ENCODE measurements at regions of chr3 and their contacts with region 1.

Region 1: DNA sequence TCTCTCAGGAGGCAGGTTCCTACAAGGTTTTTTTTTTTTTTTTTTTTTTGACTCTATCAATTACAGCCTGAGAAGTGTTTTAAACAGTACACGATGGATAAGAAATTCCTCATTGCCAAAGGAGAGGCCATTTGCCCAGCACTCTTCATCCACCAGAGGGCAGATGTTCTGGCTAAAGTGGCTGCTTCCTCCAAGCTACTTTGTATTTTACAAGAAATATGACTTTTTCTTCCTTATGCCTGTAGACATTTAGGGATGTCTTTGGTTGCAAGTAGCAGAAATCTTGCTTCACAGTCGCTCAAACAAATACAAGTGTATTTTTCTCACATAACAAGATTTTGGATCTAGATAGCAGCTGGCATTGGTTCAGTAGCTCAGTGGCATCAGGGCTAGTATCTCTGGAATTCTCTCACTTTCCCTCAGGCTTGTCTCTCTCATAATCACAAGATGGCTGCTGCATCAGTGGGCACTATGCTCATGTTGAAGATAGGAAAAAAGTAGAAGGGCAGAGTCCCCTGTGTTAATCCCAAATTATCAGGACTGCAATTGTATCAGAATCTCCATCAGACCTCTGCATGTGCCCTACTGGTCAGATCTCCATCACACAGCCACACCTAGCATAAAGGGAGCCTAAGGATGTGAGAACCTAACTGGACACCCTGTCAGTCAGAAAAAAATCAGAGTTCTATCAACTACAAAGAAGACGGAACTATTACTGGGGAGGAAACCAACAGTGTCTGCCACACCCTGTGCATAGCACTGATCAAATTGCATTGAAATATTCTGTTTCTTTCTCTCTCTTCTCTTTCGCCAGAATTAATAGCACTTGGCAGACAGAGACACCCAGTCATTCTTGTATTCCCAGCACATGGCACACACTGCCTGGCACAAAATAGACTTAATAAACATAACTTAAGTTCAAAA is 138.9 kb upstream of the COL8A1 start:
- DNase-seq: peak; percentile 70
- H3K4me3 Mint-ChIP-seq: no peak overlapping the region
- H3K27ac Mint-ChIP-seq: no peak overlapping the region
- H3K4me1 Mint-ChIP-seq: peaks cover 28% of the 10 kb centered on the region
- H3K27me3 Mint-ChIP-seq: no peaks in the 10 kb centered on the region
- CTCF ChIP-seq: peak; percentile 61

Region 2: GRCh38 chr3:99458013-99458412 is 41.5 kb before region 1 on chr3:
- CTCF ChIA-PET with region 1: no interaction called
- POLR2A ChIA-PET with region 1: no interaction called
- intact Hi-C with region 1: no loop called
- DNase-seq: no peak
- H3K4me3 Mint-ChIP-seq: no peak overlapping the region
- H3K27ac Mint-ChIP-seq: no peak overlapping the region
- H3K4me1 Mint-ChIP-seq: no peaks in the 10 kb centered on the region
- H3K27me3 Mint-ChIP-seq: no peaks in the 10 kb centered on the region
- CTCF ChIP-seq: no peak

Region 3: GRCh38 chr3:99482191-99482590 is 17.3 kb before region 1 on chr3:
- CTCF ChIA-PET with region 1: interaction called, 39 read pairs
- POLR2A ChIA-PET with region 1: no interaction called
- intact Hi-C with region 1: no loop called
- DNase-seq: no peak
- H3K4me3 Mint-ChIP-seq: no peak overlapping the region
- H3K27ac Mint-ChIP-seq: no peak overlapping the region
- H3K4me1 Mint-ChIP-seq: no peaks in the 10 kb centered on the region
- H3K27me3 Mint-ChIP-seq: no peaks in the 10 kb centered on the region
- CTCF ChIP-seq: no peak

Region 4: DNA sequence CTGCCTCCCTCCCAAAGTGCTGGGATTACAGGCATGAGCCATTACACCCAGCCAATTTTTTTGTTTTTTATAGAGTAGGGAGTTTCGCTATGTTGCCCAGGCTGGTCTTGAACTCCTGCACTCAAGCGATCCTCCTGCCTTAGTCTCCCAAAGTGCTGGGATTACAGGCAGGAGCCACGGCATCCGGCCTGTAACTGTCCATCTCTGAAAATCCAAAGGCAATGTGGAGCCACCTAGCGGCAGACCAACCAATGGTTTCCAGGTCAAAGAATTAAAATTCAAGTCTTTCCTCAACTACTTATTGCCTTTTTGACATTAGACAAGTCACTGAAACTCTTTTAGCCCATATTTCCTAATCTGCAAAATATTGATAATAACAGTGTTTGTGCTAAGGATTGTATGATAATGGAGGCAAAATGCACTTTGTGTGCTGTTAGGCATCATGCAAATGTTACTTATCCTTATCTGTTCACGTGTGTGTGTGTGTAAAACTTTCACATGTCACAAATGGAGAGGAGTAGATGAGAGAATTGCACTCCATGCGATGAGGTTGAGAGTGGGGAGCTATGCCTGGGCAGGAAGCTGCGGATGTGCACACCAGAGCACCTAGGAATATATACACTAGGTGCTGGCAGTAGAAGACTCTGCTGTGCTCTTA is 187.6 kb after region 1 on chr3:
- CTCF ChIA-PET with region 1: interaction called, 58 read pairs
- POLR2A ChIA-PET with region 1: interaction called, 5 read pairs
- intact Hi-C with region 1: loop called (anchors 1 kb)
- DNase-seq: peak; percentile 76
- H3K4me3 Mint-ChIP-seq: no peak overlapping the region
- H3K27ac Mint-ChIP-seq: peak overlapping the region; percentile 71
- H3K4me1 Mint-ChIP-seq: peaks cover 15% of the 10 kb centered on the region
- H3K27me3 Mint-ChIP-seq: no peaks in the 10 kb centered on the region
- CTCF ChIP-seq: peak; percentile 69

Region 5: GRCh38 chr3:99747915-99748314 is 248.4 kb after region 1 on chr3:
- CTCF ChIA-PET with region 1: interaction called, 42 read pairs
- POLR2A ChIA-PET with region 1: no interaction called
- intact Hi-C with region 1: loop called (anchors 1 kb)
- DNase-seq: peak; percentile 49
- H3K4me3 Mint-ChIP-seq: no peak overlapping the region
- H3K27ac Mint-ChIP-seq: no peak overlapping the region
- H3K4me1 Mint-ChIP-seq: peaks cover 14% of the 10 kb centered on the region
- H3K27me3 Mint-ChIP-seq: no peaks in the 10 kb centered on the region
- CTCF ChIP-seq: peak; percentile 39

Region 6: DNA sequence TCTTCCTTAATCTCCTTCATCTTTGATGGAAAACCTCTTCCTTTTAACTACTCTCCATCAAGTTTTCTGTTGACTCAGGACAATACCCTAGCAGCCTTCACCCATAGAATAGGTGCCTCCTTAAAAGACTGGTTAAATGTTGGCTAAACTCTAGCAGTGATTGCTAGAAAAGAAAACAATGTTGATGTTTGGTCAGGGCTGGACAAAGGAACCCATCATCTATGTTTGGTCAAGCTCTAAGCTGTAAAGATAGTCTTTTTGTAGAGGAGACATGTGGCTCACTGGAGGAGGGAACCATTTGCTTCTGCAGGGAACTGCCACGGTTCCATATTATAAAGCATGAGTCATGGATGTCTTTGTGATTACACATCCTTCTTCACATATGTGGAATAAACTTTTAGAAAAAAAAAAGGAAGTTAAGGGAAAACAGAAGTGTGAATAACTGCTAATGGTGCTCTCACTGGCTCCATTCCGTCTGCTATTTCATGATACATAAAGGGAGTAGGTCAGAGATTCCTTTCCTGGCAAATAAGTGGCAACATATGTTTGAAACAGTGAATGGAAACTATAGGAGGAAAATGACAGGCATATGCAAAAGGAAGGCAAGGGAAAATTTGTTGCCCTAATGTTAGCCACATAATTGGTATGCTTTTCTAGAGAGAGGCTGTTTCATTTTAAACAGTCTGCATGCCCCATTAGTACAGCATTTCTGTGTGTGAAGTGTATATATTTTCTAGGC is 396.4 kb after region 1 on chr3:
- CTCF ChIA-PET with region 1: no interaction called
- POLR2A ChIA-PET with region 1: no interaction called
- intact Hi-C with region 1: no loop called
- DNase-seq: peak; percentile 78
- H3K4me3 Mint-ChIP-seq: peak overlapping the region; percentile 5
- H3K27ac Mint-ChIP-seq: peak overlapping the region; percentile 79
- H3K4me1 Mint-ChIP-seq: peaks cover 15% of the 10 kb centered on the region
- H3K27me3 Mint-ChIP-seq: no peaks in the 10 kb centered on the region
- CTCF ChIP-seq: no peak